ENCODE measurements at regions of chr5 and their contacts with region 1.

Region 1: DNA sequence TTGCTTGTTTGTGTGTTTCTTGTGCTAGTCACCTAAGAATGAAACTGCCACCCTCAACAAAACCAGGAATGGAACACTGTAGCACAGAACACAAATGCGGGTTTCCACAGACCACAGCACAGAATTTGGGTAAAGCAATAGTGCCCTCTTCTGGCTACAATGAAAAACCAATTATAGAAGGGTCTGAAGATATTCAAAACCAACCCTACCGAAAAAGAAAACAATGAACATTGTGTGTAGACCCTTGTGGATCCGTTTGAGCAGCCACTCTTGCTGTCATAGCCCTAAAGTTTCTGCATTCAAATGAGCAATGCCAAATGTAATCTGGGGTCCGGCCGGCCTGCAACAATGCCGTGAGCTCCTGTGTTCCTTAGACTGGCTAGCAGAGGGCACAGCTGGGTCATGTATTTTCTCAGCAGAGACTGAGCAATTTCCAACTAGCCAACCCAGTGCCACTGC is 8.3 kb upstream of the ENC1 start:
- DNase-seq: peak; percentile 83
- H3K4me3 Mint-ChIP-seq: no peak overlapping the region
- H3K27ac Mint-ChIP-seq: no peak overlapping the region
- H3K4me1 Mint-ChIP-seq: peaks cover 1% of the 10 kb centered on the region
- H3K27me3 Mint-ChIP-seq: peaks cover 35% of the 10 kb centered on the region

Region 2: DNA sequence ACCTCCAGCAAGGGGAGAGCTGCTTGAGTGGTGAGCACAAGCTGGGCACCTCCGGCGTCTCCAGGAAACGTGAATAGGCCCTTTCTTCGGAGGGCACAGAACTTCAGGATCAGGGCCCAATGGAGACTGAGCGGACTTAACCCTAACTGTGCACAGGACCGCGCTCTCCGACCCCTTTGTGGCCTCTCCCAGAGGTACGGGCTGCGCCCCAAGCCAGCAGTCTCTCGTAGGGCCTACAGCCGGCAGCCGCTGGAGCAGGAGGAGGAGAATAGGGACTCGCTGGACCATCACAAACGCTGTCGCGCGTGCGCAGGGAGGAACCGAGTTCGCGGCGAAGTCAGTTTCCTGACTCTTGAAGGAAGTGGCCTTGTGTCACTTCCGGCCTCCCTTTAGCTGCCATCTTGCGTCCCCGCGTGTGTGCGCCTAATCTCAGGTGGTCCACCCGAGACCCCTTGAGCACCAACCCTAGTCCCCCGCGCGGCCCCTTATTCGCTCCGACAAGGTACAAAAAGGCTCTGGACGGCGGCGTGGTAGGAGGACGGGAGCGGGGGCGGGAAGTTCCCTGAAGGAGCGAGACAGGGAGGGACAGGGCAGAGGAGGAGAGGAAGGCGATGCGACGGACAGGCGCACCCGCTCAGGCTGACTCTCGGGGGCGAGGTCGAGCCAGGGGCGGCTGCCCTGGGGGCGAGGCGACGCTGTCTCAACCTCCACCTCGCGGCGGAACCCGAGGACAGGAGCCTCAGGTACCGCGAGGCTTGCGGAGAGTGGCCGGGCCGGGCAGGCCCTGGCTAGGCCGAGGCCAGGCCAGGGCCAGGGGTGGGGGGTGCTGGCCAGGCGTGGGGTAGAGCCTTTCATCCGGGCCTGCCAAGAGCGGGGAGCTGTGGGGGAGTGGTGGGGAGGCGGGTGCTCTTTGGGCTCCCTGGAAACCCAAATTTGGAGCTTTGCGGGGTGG is 1150.5 kb before region 1 on chr5 and contains the start of gene BTF3:
- intact Hi-C with region 1: loop called (anchors 5 kb)
- DNase-seq: peak; percentile 98
- H3K4me3 Mint-ChIP-seq: peak within 1 kb of the TSS; percentile 99
- H3K27ac Mint-ChIP-seq: peak within 1 kb of the TSS; percentile 100
- H3K4me1 Mint-ChIP-seq: peaks cover 30% of the 10 kb centered on the region
- H3K27me3 Mint-ChIP-seq: peaks cover 12% of the 10 kb centered on the region
- total RNA-seq, gene BTF3: 960 and 998 TPM in 2 replicates

Region 3: GRCh38 chr5:73591102-73591695 is 1057.7 kb before region 1 on chr5:
- intact Hi-C with region 1: loop called (anchors 2 kb)
- DNase-seq: peak; percentile 88
- H3K4me3 Mint-ChIP-seq: no peak overlapping the region
- H3K27ac Mint-ChIP-seq: no peak overlapping the region
- H3K4me1 Mint-ChIP-seq: no peaks in the 10 kb centered on the region
- H3K27me3 Mint-ChIP-seq: peaks cover 5% of the 10 kb centered on the region

Region 4: DNA sequence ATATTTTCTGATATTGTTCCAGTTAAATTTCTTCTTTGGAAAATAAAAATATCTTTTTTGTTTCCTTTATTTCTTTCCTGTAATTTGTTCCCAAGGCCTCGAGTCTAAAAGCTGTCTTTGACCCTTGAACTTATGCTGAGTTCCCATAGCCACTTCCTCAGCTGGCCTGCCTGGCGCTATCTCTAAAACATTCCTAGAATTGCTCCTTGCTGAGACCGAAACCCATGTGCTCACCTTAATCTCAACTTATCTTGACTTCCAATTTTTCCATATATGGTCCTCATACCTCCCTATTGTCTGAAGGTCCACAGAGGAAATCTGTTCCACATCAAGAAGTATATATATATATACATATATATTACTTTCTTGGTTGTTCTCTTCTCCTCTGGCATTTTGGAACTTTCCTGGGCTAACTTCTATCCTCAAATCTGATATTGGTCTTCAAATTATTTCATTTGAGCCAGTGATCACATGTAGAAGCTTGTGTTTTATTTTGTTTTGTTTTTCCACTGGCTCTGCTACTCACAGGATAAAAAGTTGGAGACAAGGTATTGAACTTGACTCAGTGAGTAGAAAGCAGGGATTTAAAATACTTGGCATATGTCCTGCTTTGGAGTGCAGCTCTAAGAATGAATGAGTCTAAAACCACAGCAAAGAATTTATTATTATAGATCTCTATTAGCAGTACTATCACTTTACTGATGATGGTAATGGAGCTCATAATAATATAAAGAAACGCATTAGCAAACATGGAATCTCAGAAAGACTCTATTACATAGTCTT is 53.5 kb before region 1 on chr5:
- intact Hi-C with region 1: no loop called
- DNase-seq: no peak
- H3K4me3 Mint-ChIP-seq: no peak overlapping the region
- H3K27ac Mint-ChIP-seq: no peak overlapping the region
- H3K4me1 Mint-ChIP-seq: peaks cover 3% of the 10 kb centered on the region
- H3K27me3 Mint-ChIP-seq: peaks cover 43% of the 10 kb centered on the region

Region 5: GRCh38 chr5:74810915-74811314 is 162.1 kb after region 1 on chr5:
- intact Hi-C with region 1: no loop called
- DNase-seq: no peak
- H3K4me3 Mint-ChIP-seq: no peak overlapping the region
- H3K27ac Mint-ChIP-seq: no peak overlapping the region
- H3K4me1 Mint-ChIP-seq: no peaks in the 10 kb centered on the region
- H3K27me3 Mint-ChIP-seq: no peaks in the 10 kb centered on the region

Region 6: GRCh38 chr5:75078027-75078426 is 429.2 kb after region 1 on chr5:
- intact Hi-C with region 1: no loop called
- DNase-seq: no peak
- H3K4me3 Mint-ChIP-seq: no peak overlapping the region
- H3K27ac Mint-ChIP-seq: no peak overlapping the region
- H3K4me1 Mint-ChIP-seq: peaks cover 2% of the 10 kb centered on the region
- H3K27me3 Mint-ChIP-seq: no peaks in the 10 kb centered on the region